Natural killer cell (primary cell): ENCODE measurements at regions of chr14 and their contacts with region 1.

Region 1: GRCh38 chr14:87992718-87993628 is at the start of gene GALC:
- DNase-seq: peak; percentile 97
- ATAC-seq: peak; percentile 78 to 88 (median 85)
- H3K4me3 ChIP-seq: peak within 1 kb of the TSS; percentile 78
- H3K4me3 Mint-ChIP-seq: peak within 1 kb of the TSS; percentile 98
- H3K27ac ChIP-seq: peak within 1 kb of the TSS; percentile 98
- H3K27ac Mint-ChIP-seq: peak within 1 kb of the TSS; percentile 93 to 97
- H3K4me1 ChIP-seq: peaks cover 36% of the 10 kb centered on the region
- H3K4me1 Mint-ChIP-seq: peaks cover 70 to 77% of the 10 kb centered on the region in 2 donors
- H3K27me3 ChIP-seq: no peaks in the 10 kb centered on the region
- H3K27me3 Mint-ChIP-seq: no peaks in the 10 kb centered on the region
- CTCF ChIP-seq: no peak
- total RNA-seq, gene GALC: 50.3 to 78.2 (median 67.2) TPM

Region 2: DNA sequence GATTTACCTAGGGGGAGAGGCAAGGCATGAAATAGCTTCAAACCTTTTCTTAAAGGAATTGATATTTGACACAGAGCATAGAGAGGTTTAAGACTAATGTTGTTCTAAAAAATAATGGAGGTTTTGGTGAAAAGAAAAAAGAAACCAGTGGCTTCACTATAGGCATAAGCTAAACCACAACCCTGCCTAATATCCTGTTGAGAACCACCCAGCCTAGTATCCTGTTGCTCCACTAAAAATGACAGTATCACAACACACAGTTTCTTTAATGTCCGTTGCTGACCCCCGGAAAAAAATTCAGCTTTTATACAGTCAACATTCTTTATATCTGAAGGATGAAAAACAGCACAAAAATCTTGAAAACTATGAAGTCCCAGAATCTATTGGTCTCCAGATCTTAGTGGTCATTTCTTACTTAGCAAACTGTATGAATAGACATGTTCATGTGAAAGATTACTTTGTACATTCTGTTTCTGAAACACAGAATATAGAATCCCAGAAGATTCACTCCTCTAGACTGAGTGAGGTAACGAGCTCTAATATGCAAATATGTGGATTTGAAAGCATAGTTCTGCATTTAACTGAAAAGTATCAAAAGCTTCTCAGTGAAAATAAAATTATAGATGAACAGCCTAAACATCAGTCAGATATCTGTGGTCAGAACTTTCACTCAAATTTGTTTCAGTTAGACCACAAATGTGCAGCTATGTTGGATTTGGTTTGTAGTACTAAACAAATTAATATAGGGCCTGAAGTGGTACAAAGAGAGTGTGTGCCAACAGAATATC is 40.5 kb before region 1 on chr14:
- intact Hi-C with region 1: loop called (anchors 2 kb)
- DNase-seq: peak in 1 of 2 donors; percentile 54
- ATAC-seq: peak; percentile 75 to 87 (median 83)
- H3K4me3 ChIP-seq: peak overlapping the region; percentile 23
- H3K4me3 Mint-ChIP-seq: peak overlapping the region; percentile 77
- H3K27ac ChIP-seq: peak overlapping the region; percentile 93
- H3K27ac Mint-ChIP-seq: peak overlapping the region; percentile 92 to 98
- H3K4me1 ChIP-seq: peaks cover 12% of the 10 kb centered on the region
- H3K4me1 Mint-ChIP-seq: peaks cover 76 to 79% of the 10 kb centered on the region in 2 donors
- H3K27me3 ChIP-seq: no peaks in the 10 kb centered on the region
- H3K27me3 Mint-ChIP-seq: no peaks in the 10 kb centered on the region
- CTCF ChIP-seq: no peak

Region 3: DNA sequence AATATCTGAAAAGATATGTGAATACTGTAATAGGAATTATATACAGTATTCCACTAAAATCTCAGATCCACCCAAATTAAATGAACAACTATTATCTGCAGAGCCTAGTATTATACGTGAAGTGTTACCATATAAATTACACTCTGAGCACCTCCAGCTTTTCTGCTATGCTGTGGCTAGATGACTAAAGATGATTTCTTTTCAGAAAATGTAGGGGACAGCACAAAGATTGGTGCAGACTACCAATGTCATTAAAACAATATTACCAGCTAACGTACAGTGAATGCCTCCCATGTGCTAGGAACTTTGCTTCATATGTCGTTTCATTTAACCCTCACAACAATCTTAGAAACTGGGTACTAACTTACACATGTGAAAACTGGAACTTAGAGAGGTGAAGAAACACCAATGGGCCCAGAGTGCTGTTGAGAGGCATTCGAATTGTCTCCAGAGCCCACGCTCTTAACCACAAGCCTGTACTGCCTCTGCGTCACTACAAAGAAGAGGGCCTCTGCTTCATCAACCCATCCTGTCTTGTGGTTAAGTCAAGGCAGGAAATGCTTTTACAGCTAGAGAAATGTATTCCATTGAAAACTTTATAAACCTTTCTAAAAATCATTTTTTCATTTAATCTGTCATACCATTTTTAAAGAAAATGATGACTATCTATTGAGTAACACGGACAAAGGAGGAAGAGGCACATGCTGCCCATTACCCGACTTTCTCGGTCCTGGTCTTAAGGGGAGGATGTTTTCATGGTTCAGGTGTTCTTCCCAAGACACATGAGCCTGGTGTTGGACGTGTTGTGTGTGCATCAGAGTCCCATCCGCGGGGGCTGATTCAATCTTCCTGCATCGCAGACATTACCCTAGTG is 13.2 kb after region 1 on chr14:
- intact Hi-C with region 1: loop called (anchors 1 kb)
- DNase-seq: peak; percentile 57 to 92
- ATAC-seq: peak; percentile 79 to 92 (median 90)
- H3K4me3 ChIP-seq: peak overlapping the region; percentile 78
- H3K4me3 Mint-ChIP-seq: peak overlapping the region; percentile 84
- H3K27ac ChIP-seq: peak overlapping the region; percentile 99
- H3K27ac Mint-ChIP-seq: peak overlapping the region; percentile 96 to 98
- H3K4me1 ChIP-seq: peaks cover 33% of the 10 kb centered on the region
- H3K4me1 Mint-ChIP-seq: peaks cover 68 to 74% of the 10 kb centered on the region in 2 donors
- H3K27me3 ChIP-seq: no peaks in the 10 kb centered on the region
- H3K27me3 Mint-ChIP-seq: no peaks in the 10 kb centered on the region
- CTCF ChIP-seq: no peak